Activated CD4-positive, alpha-beta T cell treated with anti-CD3 and anti-CD28 coated beads, Interleukin-2, amount 10 ng/mL, durations not matched to agents 24 days and 14 days (primary cell): ENCODE measurements at regions of chr5 and their contacts with region 1.

Region 1: DNA sequence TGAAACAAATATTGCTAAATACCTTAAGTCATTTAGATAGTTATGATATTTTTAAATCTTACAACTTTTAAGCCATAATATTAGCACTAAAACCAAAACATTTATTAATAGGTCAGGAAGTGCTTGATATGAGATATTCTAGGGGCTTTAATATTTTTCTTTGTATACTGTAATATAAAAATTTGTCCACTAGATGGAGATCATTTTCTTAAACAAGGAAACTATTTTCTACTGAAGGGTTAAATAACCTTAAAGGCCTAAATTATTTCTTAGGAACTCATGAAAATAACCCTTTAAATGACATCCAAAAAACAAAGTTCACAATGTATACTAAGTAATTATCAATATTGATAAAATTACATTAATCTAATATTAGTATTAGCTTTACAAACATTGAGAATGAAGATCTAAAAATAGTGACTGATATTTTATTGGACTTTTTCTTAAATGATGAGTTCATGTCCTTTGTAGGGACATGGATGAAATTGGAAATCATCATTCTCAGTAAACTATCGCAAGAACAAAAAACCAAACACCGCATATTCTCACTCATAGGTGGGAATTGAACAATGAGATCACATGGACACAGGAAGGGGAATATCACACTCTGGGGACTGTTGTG is 635.7 kb downstream of the RAB3C start:
- DNase-seq: no peak
- H3K4me3 Mint-ChIP-seq: no peak overlapping the region
- H3K27ac Mint-ChIP-seq: no peak overlapping the region
- H3K4me1 Mint-ChIP-seq: no peaks in the 10 kb centered on the region
- H3K27me3 Mint-ChIP-seq: peaks cover 28% of the 10 kb centered on the region

Region 2: DNA sequence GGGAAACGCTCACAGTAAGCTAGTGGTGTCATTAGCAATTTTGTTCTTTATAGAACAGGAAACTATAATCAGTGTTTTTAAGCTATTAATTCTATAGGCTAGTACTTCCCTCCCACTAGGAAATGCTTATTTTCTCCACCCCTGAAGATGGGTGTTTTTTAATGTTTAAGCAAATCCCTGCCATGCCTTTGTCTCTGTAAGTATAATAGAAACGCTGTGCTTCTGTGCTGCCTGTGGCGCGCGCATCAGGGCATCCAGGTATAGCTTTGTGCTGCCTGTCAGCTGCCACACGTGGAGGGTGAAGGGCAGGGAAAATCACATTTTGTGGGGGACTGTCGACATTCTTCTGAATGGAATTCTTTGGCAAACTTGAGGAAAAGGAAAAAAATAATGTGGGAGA is 418.2 kb before region 1 on chr5:
- intact Hi-C with region 1: no loop called
- DNase-seq: no peak
- H3K4me3 Mint-ChIP-seq: no peak overlapping the region
- H3K27ac Mint-ChIP-seq: no peak overlapping the region
- H3K4me1 Mint-ChIP-seq: peaks cover under 1% of the 10 kb centered on the region
- H3K27me3 Mint-ChIP-seq: peaks cover 5% of the 10 kb centered on the region

Region 3: DNA sequence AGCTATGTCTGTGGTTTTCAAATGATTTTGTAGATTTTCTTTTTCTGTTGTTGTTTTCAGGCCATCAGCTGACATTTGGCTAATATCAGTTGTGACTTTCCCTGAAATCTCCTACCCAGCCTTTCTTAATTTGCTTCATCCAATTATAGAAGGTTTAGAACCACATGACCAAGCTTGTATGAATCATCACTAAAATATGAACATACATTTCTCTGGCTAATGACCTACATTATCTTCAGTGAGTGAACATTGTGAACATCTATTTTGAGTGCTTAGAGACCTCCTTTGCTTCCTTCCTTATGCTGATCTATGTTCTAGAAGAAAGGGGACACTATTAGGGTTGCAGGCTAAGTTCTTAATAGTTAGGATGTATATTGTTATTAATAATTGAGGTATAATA is 103.2 kb before region 1 on chr5:
- intact Hi-C with region 1: no loop called
- DNase-seq: no peak
- H3K4me3 Mint-ChIP-seq: no peak overlapping the region
- H3K27ac Mint-ChIP-seq: no peak overlapping the region
- H3K4me1 Mint-ChIP-seq: peaks cover 15% of the 10 kb centered on the region
- H3K27me3 Mint-ChIP-seq: no peaks in the 10 kb centered on the region

Region 4: DNA sequence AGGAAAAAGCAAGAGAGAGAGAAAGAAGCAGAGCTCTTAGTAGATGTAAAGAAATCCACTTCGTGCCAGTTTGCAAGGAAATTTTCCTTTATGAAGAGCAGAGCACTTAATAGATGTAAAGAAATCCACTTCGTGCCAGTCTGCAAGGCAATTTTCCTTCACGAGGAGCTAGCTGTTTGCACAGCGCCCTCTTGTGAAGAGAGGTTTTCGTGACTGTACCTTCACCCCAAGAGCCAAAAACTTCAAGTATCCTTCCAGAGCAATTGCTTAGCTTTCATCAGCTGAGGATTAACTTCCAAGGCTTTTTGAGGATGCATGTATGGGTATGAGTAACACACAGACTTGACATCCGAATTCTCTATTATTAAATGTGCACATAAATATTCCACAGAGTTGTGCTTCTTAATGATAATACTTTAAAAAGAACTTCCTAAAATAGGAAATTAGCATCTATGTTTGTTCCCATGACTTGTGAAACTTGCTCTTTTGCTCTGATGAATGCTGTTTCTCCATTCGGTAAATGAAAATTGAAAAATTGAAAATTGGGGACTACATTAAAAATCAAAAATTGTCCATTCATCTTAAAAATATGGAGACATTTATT is 149.4 kb after region 1 on chr5:
- intact Hi-C with region 1: loop called (anchors 5 kb)
- DNase-seq: peak; percentile 84
- H3K4me3 Mint-ChIP-seq: no peak overlapping the region
- H3K27ac Mint-ChIP-seq: no peak overlapping the region
- H3K4me1 Mint-ChIP-seq: no peaks in the 10 kb centered on the region
- H3K27me3 Mint-ChIP-seq: peaks cover 44% of the 10 kb centered on the region